Activated B cell treated with CpG ODN at 0.5 μM for 24 hours (primary cell): ENCODE measurements at regions of chr7 and their contacts with region 1.

Region 1: DNA sequence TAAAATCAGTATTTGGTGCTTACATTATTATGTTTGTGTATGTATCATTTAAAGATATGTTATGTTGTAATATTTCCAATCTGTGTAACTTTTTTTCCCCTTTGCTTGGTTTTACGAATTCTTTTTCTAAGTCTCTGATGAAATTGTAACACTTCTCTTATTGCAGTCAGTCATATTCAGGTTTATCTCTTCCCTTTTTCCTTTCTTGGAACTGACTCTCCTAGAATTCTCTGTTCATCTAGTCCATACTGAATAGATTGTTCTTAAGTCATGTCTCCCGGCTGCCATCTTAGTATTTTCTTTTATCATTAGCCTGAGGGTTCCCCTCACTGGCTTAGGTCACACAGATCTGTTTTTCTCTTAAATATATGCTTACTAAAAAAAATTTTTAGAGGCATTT is 44.6 kb downstream of the PHTF2 start:
- DNase-seq: no peak
- ATAC-seq: no peak
- H3K4me3 Mint-ChIP-seq: no peak overlapping the region
- H3K27ac Mint-ChIP-seq: no peak overlapping the region
- H3K4me1 Mint-ChIP-seq: peaks cover 56% of the 10 kb centered on the region
- H3K27me3 Mint-ChIP-seq: no peaks in the 10 kb centered on the region
- CTCF ChIP-seq: no peak

Region 2: GRCh38 chr7:77830649-77831355 is 12.4 kb before region 1 on chr7:
- CTCF ChIA-PET with region 1: interaction called, 3 read pairs
- POLR2A ChIA-PET with region 1: no interaction called
- intact Hi-C with region 1: loop called (anchors 1 kb)
- DNase-seq: no peak
- ATAC-seq: no peak
- H3K4me3 Mint-ChIP-seq: no peak overlapping the region
- H3K27ac Mint-ChIP-seq: peak overlapping the region; percentile 55
- H3K4me1 Mint-ChIP-seq: peaks cover 85% of the 10 kb centered on the region
- H3K27me3 Mint-ChIP-seq: no peaks in the 10 kb centered on the region
- CTCF ChIP-seq: no peak

Region 3: GRCh38 chr7:77866786-77867536 is 23.8 kb after region 1 on chr7:
- CTCF ChIA-PET with region 1: no interaction called
- POLR2A ChIA-PET with region 1: interaction called, 10 read pairs
- intact Hi-C with region 1: no loop called
- DNase-seq: no peak
- ATAC-seq: no peak
- H3K4me3 Mint-ChIP-seq: no peak overlapping the region
- H3K27ac Mint-ChIP-seq: no peak overlapping the region
- H3K4me1 Mint-ChIP-seq: peaks cover 54% of the 10 kb centered on the region
- H3K27me3 Mint-ChIP-seq: no peaks in the 10 kb centered on the region
- CTCF ChIP-seq: no peak